ENCODE measurements at regions of chr3 and their contacts with region 1.

Region 1: DNA sequence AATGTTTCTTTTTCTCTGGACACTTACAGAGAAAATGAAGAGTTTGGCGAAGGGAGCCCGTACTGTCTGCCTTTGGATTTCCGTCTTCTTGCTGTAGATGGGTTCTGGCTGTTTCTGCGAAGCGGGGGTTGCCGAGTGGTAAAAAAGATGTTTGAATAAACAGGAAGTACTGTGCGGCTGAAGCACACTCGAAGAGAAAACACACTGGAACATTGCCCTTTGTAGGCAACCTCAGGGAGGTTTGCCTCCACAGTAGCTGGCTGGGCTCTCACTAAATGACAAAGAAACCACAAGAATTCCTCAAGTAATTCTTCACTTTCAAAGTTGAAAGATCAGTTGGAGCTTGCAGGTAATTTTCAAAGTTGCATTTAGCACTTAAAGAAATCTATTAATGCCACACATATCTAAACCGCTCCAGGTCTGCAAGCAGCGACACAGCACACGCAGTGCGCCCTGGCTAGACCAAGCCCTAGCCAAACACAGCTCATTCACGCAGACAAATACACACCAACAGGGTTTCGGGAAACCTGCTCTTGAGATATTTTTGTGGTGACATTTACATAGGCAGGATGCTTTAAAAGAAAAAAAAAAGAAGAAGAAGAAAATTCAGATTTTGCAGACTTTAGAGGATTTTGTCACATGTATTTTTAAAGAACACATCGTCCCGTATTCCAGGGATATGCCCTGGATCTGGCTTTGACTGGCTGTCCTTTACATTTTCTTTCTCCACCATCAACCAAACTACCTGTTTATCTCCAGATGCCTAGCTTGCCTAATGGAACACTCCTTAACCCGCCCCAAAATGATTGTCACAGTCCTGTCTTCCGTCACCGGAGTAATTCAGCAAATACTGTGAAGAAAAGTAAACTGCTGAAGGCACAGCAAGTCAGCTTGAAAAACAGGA is 452.8 kb downstream of the FOXP1 start:
- DNase-seq: peak; percentile 67 to 76 (median 72)
- H3K4me3 ChIP-seq: peak overlapping the region; percentile 50
- H3K27ac ChIP-seq: peak overlapping the region; percentile 30 to 89
- H3K4me1 ChIP-seq: peaks cover 16% of the 10 kb centered on the region
- H3K27me3 ChIP-seq: no peaks in the 10 kb centered on the region
- CTCF ChIP-seq: no peak
- EP300 ChIP-seq: no peak
- POLR2A ChIP-seq: peak; percentile 19

Region 2: DNA sequence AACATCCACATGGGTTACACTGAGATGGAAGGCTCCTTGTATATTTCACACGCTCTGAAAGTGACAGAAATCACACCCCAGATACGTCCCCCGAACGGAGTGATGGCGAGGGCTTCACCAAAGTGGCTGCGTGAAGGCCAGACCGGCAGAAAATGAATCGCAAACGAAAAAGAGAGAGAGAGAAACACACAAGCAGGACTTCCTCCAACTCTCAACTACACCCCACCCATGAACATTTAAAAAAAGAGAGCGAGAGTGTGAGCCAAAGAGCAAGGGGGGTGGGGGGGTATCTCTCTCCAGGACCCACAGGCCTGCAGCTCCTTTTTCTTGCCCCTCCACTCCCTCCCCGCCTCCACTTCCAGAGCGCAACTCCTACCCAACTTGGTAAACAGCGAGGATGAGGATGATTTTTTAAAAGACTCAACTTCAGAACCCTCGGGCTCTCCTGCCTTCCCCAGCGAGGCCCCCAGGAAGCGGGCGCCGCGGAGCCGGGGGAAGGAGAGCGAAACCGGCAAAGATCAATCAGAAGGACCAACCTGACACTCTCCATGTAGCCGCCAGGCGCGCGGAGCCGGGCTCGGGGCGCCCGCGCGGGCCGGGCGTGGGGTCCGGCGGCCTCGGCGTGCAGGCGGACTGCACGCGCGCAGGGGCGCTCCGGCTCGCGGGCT is 66.3 kb before region 1 on chr3:
- intact Hi-C with region 1: loop called in 2 of 4 experiments (anchors 5 to 10 kb)
- DNase-seq: peak in 4 of 5 donors; percentile 60 to 76 (median 66)
- H3K4me3 ChIP-seq: peak overlapping the region; percentile 67
- H3K27ac ChIP-seq: peak overlapping the region; percentile 96 to 97
- H3K4me1 ChIP-seq: peaks cover 12% of the 10 kb centered on the region
- H3K27me3 ChIP-seq: no peaks in the 10 kb centered on the region
- CTCF ChIP-seq: peak in 1 of 3 donors; percentile 34
- EP300 ChIP-seq: no peak
- POLR2A ChIP-seq: peak; percentile 12

Region 3: GRCh38 chr3:71069797-71070196 is 60.9 kb before region 1 on chr3:
- intact Hi-C with region 1: loop called in 2 of 4 experiments (anchors 5 to 10 kb)
- DNase-seq: peak; percentile 39 to 64 (median 55)
- H3K4me3 ChIP-seq: no peak overlapping the region
- H3K27ac ChIP-seq: no peak overlapping the region
- H3K4me1 ChIP-seq: peaks cover 23% of the 10 kb centered on the region
- H3K27me3 ChIP-seq: no peaks in the 10 kb centered on the region
- CTCF ChIP-seq: peak in 1 of 3 donors; percentile 11
- EP300 ChIP-seq: no peak
- POLR2A ChIP-seq: no peak

Region 4: GRCh38 chr3:71168880-71169411 is 38.2 kb after region 1 on chr3:
- intact Hi-C with region 1: loop called in 2 of 4 experiments (anchors 5 kb)
- DNase-seq: peak in 2 of 5 donors; percentile 20 to 37
- H3K4me3 ChIP-seq: no peak overlapping the region
- H3K27ac ChIP-seq: peak overlapping the region in 1 of 2 donors; percentile 89
- H3K4me1 ChIP-seq: peaks cover 16% of the 10 kb centered on the region
- H3K27me3 ChIP-seq: no peaks in the 10 kb centered on the region
- CTCF ChIP-seq: no peak
- EP300 ChIP-seq: no peak
- POLR2A ChIP-seq: no peak

Region 5: GRCh38 chr3:71201939-71202338 is 71.2 kb after region 1 on chr3:
- intact Hi-C with region 1: loop called in 1 of 4 experiments (anchors 10 kb)
- DNase-seq: peak; percentile 84 to 90 (median 87)
- H3K4me3 ChIP-seq: no peak overlapping the region
- H3K27ac ChIP-seq: no peak overlapping the region
- H3K4me1 ChIP-seq: peaks cover 5% of the 10 kb centered on the region
- H3K27me3 ChIP-seq: no peaks in the 10 kb centered on the region
- CTCF ChIP-seq: no peak
- EP300 ChIP-seq: no peak
- POLR2A ChIP-seq: no peak

Region 6: GRCh38 chr3:71317749-71318457 is 187.2 kb after region 1 on chr3:
- intact Hi-C with region 1: no loop called
- DNase-seq: no peak
- H3K4me3 ChIP-seq: no peak overlapping the region
- H3K27ac ChIP-seq: no peak overlapping the region
- H3K4me1 ChIP-seq: peaks cover 3% of the 10 kb centered on the region
- H3K27me3 ChIP-seq: no peaks in the 10 kb centered on the region
- CTCF ChIP-seq: no peak
- EP300 ChIP-seq: no peak
- POLR2A ChIP-seq: no peak